ENCODE measurements at regions of chr1 and their contacts with region 1.

Region 1: DNA sequence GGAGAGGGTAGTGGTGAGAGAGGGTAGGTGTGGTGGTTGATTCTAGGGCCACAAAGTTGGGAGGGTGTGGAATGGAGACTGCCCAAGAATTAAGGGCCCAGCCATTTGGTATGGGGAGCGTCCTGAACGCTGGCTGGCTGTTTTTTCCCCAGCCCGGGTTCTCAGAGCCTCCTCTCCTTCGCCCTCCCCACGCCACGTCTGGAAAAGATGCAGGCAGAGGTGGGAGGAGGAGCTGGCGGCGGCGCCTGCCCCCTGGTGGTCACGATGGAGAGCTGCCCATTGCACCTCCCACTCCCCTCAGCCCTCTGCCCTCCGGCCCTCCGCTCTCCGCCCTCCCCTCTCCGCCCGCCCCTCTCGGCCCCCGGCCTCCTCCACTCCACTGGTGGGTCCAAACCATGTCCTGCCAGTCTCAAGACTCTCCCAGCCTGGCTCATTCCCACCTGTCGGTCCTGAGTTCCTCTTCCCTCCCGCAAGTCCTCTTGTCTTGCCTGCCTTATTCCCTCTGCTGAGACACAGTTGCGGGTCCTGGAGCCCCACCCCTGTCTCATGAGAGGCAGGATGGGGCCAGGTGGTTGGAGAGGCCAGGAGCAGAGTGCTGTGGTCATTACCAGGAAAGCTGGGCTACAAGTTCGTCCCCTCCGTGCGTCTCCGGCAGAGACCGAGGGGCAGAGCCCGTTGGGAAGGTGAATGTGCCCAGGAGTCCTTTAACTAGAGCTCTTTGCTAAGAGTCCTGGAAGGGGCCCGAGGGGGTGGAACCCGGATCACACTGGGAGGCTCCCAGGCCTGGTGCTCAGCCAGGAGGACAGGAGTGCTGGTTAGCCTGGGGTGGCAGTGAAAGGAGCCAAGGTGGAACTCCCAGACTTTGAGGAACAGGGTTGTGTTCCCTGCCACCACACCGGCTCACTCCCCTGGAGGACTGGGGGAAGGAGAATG is 22.6 kb downstream of the ETNK2 start:
- DNase-seq: peak; percentile 55 to 65 (median 59)
- H3K4me3 ChIP-seq: no peak overlapping the region
- H3K4me3 Mint-ChIP-seq: peak overlapping the region in 2 of 8 donors; percentile 36 to 46
- H3K27ac ChIP-seq: no peak overlapping the region
- H3K27ac Mint-ChIP-seq: peak overlapping the region in 4 of 7 donors; percentile 27 to 75 (median 44)
- H3K4me1 ChIP-seq: peaks cover 9% of the 10 kb centered on the region
- H3K4me1 Mint-ChIP-seq: peaks cover 5 to 14% (median 10%) of the 10 kb centered on the region in 4 donors
- H3K27me3 ChIP-seq: no peaks in the 10 kb centered on the region
- H3K27me3 Mint-ChIP-seq: peaks cover 0 to 1% of the 10 kb centered on the region in 2 donors

Region 2: DNA sequence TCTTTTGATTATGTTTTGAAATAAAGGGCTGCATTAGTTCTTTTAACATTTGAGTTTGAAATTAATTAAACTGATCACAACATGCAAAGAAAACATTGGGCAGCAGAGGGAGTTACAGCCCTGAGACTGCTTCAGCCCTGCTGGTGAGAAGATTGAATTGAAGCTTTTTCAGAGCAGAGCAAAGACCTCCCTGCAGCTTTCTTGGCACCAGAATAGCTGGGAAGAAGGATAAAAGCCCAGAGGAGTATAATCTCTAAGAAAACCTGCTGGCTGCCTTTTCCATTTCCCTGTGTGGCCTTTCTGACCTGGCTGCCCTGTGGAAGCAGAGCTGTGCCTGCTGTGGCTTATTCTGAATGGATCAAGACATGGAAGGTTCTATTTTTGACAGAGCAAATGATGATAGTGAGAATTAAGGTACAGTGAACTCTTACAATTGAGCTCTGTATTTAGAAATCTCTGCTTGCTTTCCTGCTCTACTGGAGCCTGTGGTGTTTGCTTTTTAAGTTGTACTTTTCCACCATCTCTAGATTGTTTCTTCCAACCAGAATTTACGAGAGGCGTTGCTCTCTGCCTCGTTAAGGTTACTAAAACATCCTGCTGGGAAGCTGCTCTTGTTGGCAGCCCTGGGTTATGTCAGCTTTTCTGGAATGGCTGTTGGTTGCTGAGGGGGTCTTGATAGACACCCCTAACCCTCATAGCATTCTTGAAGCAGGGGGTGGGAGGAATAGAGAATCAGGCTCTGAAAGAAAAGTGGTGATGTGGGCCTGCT is 257.9 kb before region 1 on chr1:
- CTCF ChIA-PET with region 1: interaction called, 54 read pairs
- POLR2A ChIA-PET with region 1: interaction called, 3 read pairs
- intact Hi-C with region 1: loop called (anchors 1 kb)
- DNase-seq: peak; percentile 17 to 39 (median 29)
- H3K4me3 ChIP-seq: no peak overlapping the region
- H3K4me3 Mint-ChIP-seq: no peak overlapping the region
- H3K27ac ChIP-seq: no peak overlapping the region
- H3K27ac Mint-ChIP-seq: peak overlapping the region in 4 of 7 donors; percentile 4 to 58 (median 50)
- H3K4me1 ChIP-seq: no peaks in the 10 kb centered on the region
- H3K4me1 Mint-ChIP-seq: peaks cover 0 to 13% (median 2%) of the 10 kb centered on the region in 4 donors
- H3K27me3 ChIP-seq: no peaks in the 10 kb centered on the region
- H3K27me3 Mint-ChIP-seq: no peaks in the 10 kb centered on the region

Region 3: DNA sequence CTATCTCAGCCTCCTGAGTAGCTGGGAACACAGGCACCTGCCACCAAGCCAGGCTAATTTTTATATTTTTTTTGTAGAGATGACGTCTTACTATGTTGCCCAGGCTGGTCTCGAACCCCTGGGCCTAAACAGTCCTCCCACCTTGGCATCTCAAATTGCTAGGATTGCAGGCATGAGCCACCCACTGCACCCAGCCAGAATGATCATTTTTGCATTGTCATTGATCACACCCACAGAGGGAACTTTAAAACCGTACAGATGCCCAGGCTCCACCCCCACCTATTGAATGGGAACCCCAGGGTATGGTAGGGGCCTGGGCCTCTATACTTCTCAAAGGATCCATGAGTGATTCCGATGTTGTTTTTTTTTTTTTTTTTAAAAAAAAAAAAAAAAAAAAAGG is 14.1 kb before region 1 on chr1:
- CTCF ChIA-PET with region 1: interaction called, 16 read pairs
- POLR2A ChIA-PET with region 1: interaction called, 4 read pairs
- intact Hi-C with region 1: no loop called
- DNase-seq: no peak
- H3K4me3 ChIP-seq: no peak overlapping the region
- H3K4me3 Mint-ChIP-seq: no peak overlapping the region
- H3K27ac ChIP-seq: no peak overlapping the region
- H3K27ac Mint-ChIP-seq: peak overlapping the region in 1 of 7 donors; percentile 37
- H3K4me1 ChIP-seq: no peaks in the 10 kb centered on the region
- H3K4me1 Mint-ChIP-seq: peaks cover 0 to 7% (median 0%) of the 10 kb centered on the region in 4 donors
- H3K27me3 ChIP-seq: no peaks in the 10 kb centered on the region
- H3K27me3 Mint-ChIP-seq: no peaks in the 10 kb centered on the region